Pancreas (tissue), 10 donors: ENCODE measurements at regions of chr7 and their contacts with region 1.

Region 1: DNA sequence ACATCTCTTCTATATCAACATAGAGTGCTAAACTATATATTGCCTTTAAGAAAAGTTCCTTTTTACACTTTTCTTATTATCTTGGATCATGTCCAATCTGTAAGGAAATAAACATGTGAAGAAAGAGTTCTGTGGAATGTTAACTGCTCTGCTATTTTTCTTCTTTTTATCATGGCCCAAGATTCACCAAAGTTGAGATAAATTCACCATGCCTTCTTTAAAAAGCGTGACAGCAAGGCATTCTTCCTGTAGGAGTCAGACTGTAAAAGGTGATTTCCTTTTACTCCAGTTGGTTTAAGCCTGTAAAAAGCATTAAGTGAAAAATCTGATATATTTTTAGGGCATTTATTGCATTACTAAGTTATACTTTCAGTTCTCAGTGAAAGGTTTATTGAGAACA is 165.7 kb upstream of the FZD1 start:
- DNase-seq: no peak
- ATAC-seq: no peak
- H3K4me3 ChIP-seq: no peak overlapping the region
- H3K27ac ChIP-seq: no peak overlapping the region
- H3K4me1 ChIP-seq: no peaks in the 10 kb centered on the region
- H3K27me3 ChIP-seq: no peaks in the 10 kb centered on the region
- CTCF ChIP-seq: no peak

Region 2: GRCh38 chr7:91264046-91264923 is 165.7 kb after region 1 on chr7 and contains the start of gene FZD1:
- intact Hi-C with region 1: loop called in 1 of 3 experiments (anchors 10 kb)
- DNase-seq: peak; percentile 95 to 98 (median 98)
- ATAC-seq: peak; percentile 88 to 94 (median 90)
- H3K4me3 ChIP-seq: peak within 1 kb of the TSS; percentile 68 to 89 (median 79)
- H3K27ac ChIP-seq: peak within 1 kb of the TSS; percentile 83 to 98 (median 92)
- H3K4me1 ChIP-seq: peaks cover 6 to 15% (median 11%) of the 10 kb centered on the region in 3 donors
- H3K27me3 ChIP-seq: no peaks in the 10 kb centered on the region
- CTCF ChIP-seq: peak in 1 of 4 donors; percentile 7
- total RNA-seq, gene FZD1: 4.3 to 10.5 (median 6.2) TPM

Region 3: DNA sequence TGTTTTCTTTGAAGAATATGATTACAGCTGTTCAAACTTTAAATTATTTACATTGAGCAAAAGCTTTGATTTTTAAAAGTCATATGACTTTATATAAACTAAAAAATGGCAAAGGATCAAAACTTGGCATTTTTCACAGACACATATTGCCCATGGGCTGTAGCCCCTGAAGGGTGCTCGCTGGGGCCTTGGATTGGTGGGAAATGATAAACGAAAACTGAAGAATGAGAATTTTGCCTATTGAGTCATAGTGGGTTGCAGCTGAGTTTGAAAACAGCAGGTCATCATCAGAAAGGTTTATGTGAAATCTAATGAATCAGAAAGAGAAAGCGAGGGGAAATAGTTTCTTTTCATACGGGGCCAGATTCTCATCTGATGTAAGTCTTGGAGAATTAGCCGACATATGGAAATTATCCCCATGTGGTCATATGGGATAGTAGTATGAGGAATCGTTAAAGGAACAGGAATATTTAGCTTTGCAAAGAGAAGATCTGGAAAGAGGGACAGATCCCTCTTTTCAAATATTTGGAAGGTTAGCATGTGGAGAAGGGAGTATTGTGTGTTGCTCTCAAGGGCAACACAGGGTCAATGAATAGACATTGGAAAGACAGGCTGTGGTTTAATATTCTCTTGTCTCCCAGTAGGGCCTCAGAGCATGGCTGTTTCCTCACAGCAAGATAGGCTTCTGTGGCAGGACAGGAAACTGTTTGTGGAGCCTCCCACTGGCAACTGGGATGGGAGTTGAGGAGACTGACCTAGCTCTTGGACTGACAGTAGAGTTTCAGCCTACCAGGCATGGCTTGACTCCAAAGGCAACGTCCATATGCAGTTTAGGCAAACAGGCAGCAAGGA is 284.7 kb after region 1 on chr7:
- intact Hi-C with region 1: no loop called
- DNase-seq: no peak
- ATAC-seq: no peak
- H3K4me3 ChIP-seq: no peak overlapping the region
- H3K27ac ChIP-seq: no peak overlapping the region
- H3K4me1 ChIP-seq: no peaks in the 10 kb centered on the region
- H3K27me3 ChIP-seq: no peaks in the 10 kb centered on the region
- CTCF ChIP-seq: no peak